ENCODE measurements at regions of chr7 and their contacts with region 1.

Region 1: DNA sequence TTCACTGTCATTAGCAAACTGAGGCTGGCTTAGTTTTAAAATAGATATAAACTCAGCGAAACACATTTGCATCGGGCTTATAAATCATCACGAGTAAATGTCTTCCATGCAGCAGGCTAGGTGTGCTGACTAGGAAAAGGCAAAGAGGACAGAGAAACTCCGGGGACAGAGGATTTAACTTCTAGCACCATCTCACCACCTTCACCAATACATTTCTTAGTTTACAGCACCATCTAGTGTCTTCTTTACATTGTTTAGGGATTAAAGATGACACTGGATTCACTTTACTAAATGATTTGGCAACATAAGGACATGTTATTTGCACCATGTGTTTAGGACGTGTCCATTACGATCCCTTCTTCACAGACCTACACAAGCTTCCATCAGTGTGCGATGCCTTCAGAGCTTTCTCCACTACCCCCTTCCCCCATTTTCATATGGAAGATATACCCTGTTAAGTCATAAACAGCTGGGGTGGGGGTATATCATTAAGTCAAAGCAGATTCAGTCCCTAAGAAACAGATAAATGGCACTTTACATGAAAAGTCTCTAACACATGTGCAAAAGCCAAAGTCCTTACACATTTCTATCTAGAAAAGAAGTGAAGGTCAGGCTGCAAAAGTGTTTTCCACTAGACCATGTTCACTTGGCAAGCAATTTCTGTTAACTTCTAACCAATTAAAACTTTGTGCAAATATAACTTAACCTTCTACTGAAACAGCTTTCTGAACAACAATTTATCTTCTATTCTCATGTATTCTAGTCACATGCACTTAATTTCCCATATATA is 103.3 kb downstream of the GRB10 start:
- DNase-seq: no peak
- H3K4me3 Mint-ChIP-seq: no peak overlapping the region
- H3K27ac Mint-ChIP-seq: no peak overlapping the region
- H3K4me1 Mint-ChIP-seq: peaks cover 2% of the 10 kb centered on the region
- H3K27me3 Mint-ChIP-seq: no peaks in the 10 kb centered on the region

Region 2: DNA sequence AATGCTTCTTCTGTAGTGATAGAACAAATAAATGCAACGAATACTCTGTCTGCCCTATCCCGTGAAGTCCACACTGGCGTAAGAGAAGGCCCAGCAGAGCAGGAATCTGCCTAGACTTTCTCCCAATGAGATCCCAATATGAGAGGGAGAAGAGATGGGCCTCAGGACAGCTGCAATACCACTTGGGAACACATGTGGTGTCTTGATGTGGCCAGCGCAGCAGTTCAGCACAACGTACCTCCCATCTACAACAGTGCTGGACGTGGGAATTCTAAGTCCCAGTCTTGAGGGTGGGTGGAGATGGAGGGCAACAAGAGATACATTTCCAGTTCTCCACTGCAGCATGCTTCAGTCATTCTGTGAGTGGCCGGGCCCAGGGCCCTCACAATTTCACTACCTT is 275.0 kb before region 1 on chr7:
- CTCF ChIA-PET with region 1: no interaction called
- POLR2A ChIA-PET with region 1: no interaction called
- DNase-seq: no peak
- H3K4me3 Mint-ChIP-seq: no peak overlapping the region
- H3K27ac Mint-ChIP-seq: no peak overlapping the region
- H3K4me1 Mint-ChIP-seq: peaks cover 61% of the 10 kb centered on the region
- H3K27me3 Mint-ChIP-seq: no peaks in the 10 kb centered on the region

Region 3: DNA sequence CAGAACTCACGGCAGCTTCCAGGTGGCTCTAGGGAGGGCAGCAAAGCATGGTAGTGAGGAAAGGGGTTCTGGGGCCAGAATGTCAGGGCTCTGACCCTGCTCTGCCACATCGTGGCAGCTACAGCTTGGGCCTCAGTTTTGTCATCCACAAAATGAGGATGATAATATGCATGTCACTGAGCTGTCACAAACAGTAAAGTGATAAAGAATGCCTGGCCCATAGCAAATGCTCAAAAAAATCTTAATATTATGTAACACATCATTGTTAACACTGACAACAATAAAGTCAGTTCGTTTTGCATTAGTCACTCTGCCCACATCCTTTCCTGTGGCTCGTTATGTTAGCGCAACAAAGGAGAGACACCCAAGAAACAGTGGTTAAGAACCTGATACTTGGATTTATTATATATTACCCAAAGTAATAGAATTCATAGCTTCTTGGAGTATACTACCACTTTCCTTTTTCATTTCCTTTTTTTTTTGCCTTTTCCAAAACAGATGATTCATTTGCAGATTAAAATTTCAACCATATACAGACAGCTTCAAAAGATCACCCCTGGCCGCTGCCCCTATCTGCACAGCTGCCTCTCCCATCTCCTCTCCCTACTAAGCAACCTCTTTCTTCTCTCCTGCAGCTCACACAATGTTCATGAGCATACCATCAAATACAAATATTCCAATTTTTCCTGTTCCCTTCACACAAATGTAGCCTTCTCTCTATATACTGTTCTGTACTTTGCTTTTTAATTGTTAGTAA is 68.7 kb before region 1 on chr7:
- CTCF ChIA-PET with region 1: interaction called, 10 read pairs
- POLR2A ChIA-PET with region 1: no interaction called
- DNase-seq: peak; percentile 78
- H3K4me3 Mint-ChIP-seq: no peak overlapping the region
- H3K27ac Mint-ChIP-seq: peak overlapping the region; percentile 24
- H3K4me1 Mint-ChIP-seq: peaks cover 48% of the 10 kb centered on the region
- H3K27me3 Mint-ChIP-seq: peaks cover 2% of the 10 kb centered on the region

Region 4: DNA sequence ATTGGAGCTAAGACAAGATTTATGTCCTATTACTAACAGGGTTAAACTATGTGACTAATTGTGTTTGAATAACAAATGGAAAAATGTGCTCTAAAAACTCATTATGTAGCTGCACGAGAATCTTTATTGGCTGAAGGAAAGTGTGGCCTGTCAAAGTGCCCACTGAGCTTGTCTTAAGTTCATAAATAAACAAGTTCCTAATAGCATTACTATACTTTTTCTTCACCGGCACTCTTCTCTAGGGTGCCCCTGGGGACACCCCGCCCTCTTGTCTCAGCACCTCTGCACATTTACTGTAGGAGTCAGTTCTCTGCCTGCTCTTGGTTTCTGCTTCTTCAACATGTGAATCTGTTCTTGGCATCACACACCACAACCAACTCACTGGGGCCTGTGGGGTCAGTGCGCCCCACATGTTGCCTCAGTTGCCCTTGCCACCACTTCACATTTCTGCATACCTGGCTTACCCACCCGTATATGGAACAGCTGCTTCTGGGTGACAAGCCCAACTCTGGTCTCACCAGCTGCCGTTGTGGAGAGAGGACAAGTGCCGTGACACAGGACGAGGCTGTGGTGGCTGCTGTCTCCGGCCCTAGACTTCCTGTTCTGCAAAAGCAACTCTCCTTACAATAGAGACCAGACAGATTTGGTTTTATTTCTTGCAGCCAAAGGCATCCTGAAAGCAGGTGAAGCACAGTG is 17.9 kb before region 1 on chr7:
- CTCF ChIA-PET with region 1: interaction called, 14 read pairs
- POLR2A ChIA-PET with region 1: interaction called, 3 read pairs
- DNase-seq: peak; percentile 69
- H3K4me3 Mint-ChIP-seq: peak overlapping the region; percentile 74
- H3K27ac Mint-ChIP-seq: peak overlapping the region; percentile 96
- H3K4me1 Mint-ChIP-seq: peaks cover 83% of the 10 kb centered on the region
- H3K27me3 Mint-ChIP-seq: no peaks in the 10 kb centered on the region